ENCODE measurements at regions of chr6 and their contacts with region 1.

Region 1: DNA sequence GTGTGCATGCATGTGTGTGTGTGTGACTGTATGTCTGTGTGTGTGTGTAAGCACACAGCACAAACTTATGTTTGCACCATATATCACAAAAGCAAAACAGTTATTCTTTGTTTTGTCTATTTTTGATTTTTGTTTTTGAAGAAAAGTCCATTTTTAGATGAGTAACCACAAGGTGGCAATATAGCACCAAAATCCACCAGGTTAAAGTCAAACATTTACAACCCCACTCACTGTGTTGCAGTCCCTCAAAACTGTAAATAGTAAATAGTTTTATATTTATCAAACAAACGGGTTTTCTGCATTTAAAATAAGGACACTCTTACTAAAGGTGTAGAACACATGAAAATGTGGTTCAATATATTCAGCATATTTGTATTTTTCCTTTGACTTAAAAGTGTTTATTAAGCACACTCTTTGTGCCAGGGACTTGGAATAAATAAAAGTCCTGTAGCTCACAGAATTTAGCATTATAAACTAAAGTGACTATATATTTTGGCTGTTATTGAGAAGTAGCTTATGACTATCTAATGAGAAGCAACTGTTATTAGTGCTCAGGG is 118.5 kb downstream of the GFRAL start:
- DNase-seq: no peak
- H3K4me3 ChIP-seq: no peak overlapping the region
- H3K27ac ChIP-seq: no peak overlapping the region
- H3K4me1 ChIP-seq: no peaks in the 10 kb centered on the region
- H3K27me3 ChIP-seq: no peaks in the 10 kb centered on the region
- CTCF ChIP-seq: peak; percentile 62

Region 2: GRCh38 chr6:55543633-55544309 is 98.0 kb after region 1 on chr6:
- intact Hi-C with region 1: no loop called
- DNase-seq: no peak
- H3K4me3 ChIP-seq: no peak overlapping the region
- H3K27ac ChIP-seq: no peak overlapping the region
- H3K4me1 ChIP-seq: no peaks in the 10 kb centered on the region
- H3K27me3 ChIP-seq: no peaks in the 10 kb centered on the region
- CTCF ChIP-seq: no peak

Region 3: GRCh38 chr6:55886185-55886836 is 440.6 kb after region 1 on chr6:
- intact Hi-C with region 1: loop called (anchors 5 kb)
- DNase-seq: no peak
- H3K4me3 ChIP-seq: no peak overlapping the region
- H3K27ac ChIP-seq: no peak overlapping the region
- H3K4me1 ChIP-seq: no peaks in the 10 kb centered on the region
- H3K27me3 ChIP-seq: no peaks in the 10 kb centered on the region
- CTCF ChIP-seq: peak; percentile 49

Region 4: GRCh38 chr6:55941702-55942101 is 496.0 kb after region 1 on chr6:
- intact Hi-C with region 1: loop called (anchors 10 kb)
- DNase-seq: no peak
- H3K4me3 ChIP-seq: no peak overlapping the region
- H3K27ac ChIP-seq: no peak overlapping the region
- H3K4me1 ChIP-seq: no peaks in the 10 kb centered on the region
- H3K27me3 ChIP-seq: no peaks in the 10 kb centered on the region
- CTCF ChIP-seq: peak; percentile 27